PC-3 (cell line): ENCODE measurements at regions of chr20 and their contacts with region 1.

Region 1: GRCh38 chr20:51639206-51639832 is 96.8 kb upstream of the NFATC2 start:
- DNase-seq: peak; percentile 96
- ATAC-seq: peak; percentile 55
- H3K4me3 ChIP-seq: no peak overlapping the region
- H3K27ac ChIP-seq: peak overlapping the region; percentile 65
- H3K4me1 ChIP-seq: peaks cover 38% of the 10 kb centered on the region
- H3K27me3 ChIP-seq: no peaks in the 10 kb centered on the region
- CTCF ChIP-seq: peak; percentile 99

Region 2: GRCh38 chr20:51661609-51662178 is 22.4 kb after region 1 on chr20:
- CTCF ChIA-PET with region 1: interaction called, 4 read pairs
- POLR2A ChIA-PET with region 1: interaction called, 3 read pairs
- intact Hi-C with region 1: loop called (anchors 2 kb)
- DNase-seq: peak; percentile 99
- ATAC-seq: peak; percentile 60
- H3K4me3 ChIP-seq: no peak overlapping the region
- H3K27ac ChIP-seq: peak overlapping the region; percentile 88
- H3K4me1 ChIP-seq: peaks cover 55% of the 10 kb centered on the region
- H3K27me3 ChIP-seq: no peaks in the 10 kb centered on the region
- CTCF ChIP-seq: no peak

Region 3: DNA sequence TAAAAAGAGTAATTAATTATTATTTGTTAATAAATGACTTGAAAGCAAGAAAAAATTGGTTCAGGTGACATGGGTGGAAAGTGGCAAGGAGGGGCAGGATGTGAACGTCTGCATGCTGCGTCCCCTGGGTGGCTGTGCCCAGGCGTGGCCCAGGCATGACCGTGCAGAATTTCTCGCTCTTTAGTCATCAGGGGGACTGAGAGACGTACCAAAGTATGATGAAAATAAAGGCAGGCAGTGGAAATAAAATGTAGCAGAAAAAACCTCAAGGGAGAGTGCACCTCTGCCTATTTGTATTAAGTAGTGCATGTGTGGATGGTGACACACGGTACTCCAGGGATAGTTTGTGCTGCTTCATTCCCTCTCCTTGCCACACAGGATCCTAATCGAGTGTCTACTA is 47.7 kb after region 1 on chr20:
- CTCF ChIA-PET with region 1: no interaction called
- POLR2A ChIA-PET with region 1: no interaction called
- intact Hi-C with region 1: no loop called
- DNase-seq: peak; percentile 98
- ATAC-seq: peak; percentile 99
- H3K4me3 ChIP-seq: no peak overlapping the region
- H3K27ac ChIP-seq: peak overlapping the region; percentile 76
- H3K4me1 ChIP-seq: peaks cover 15% of the 10 kb centered on the region
- H3K27me3 ChIP-seq: no peaks in the 10 kb centered on the region
- CTCF ChIP-seq: no peak

Region 4: DNA sequence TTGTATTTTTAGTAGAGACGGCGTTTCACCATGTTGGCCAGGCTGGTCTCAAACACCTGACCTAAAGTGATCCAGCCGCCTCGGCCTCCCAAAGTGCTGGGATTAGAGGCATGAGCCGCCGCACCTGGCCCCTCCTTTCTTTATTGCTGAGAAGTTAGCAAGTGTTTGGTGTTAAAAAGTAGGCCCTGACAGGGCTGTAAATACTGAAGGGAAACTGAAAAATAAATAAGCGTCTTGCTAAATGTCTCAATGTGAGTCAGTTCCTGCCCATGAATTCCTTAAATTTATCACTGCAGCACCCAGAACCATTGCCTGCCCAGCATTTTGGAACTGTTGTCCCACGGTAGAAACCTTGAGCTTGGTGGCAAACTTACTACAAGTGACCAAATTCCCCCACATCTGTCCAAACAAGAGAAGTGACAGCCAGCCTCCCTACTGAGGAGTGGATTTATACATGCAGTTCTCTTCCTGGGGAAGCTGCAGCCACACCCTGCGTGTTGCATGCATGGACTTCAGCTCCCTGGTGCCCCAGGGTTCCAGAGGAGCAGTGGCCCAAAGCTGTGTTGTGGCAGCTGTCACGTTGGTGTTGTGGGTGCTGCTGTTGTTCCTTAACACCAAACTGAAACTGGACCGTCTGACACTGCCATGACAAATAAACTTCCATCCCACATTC is 103.5 kb after region 1 on chr20:
- CTCF ChIA-PET with region 1: interaction called, 5 read pairs
- POLR2A ChIA-PET with region 1: no interaction called
- intact Hi-C with region 1: loop called (anchors 2 kb)
- DNase-seq: peak; percentile 95
- ATAC-seq: peak; percentile 74
- H3K4me3 ChIP-seq: peak overlapping the region; percentile 2; the same call in 1 of the 2 replicates
- H3K27ac ChIP-seq: peak overlapping the region; percentile 92
- H3K4me1 ChIP-seq: peaks cover 57% of the 10 kb centered on the region
- H3K27me3 ChIP-seq: no peaks in the 10 kb centered on the region
- CTCF ChIP-seq: no peak

Region 5: DNA sequence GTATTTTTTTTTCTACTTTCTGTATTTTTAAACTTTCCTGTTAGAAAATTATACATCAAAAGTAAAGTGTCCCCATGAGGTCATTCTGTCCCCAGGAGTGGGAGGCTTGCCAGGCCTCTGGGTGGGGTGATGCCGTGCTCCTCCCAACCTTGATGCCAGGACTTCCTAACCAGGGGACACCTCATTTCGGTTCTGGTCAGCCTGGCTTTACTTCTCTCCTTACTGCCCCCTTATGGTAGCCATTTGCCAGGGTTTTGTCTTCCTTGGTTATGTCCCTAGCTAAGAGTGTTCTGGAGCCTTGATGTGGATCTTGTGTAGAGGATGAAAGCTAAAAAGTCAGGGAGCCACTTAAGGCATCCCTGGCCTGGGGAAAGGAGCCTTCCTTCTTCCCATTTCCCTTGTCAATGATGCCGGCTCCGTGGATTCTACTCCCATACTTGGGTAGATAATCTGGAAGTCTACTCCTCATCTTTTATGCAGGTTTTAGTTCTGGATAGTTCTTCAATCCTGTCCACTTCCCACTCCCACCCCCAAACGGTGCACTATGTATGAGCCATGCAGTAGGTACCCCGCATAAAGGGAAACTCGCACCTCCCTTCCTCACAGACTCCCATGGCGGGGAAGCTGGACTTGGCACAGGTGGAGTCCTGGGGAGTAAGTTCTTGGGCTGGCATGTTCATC is 327.1 kb after region 1 on chr20:
- CTCF ChIA-PET with region 1: interaction called, 7 read pairs
- POLR2A ChIA-PET with region 1: no interaction called
- intact Hi-C with region 1: loop called (anchors 1 kb)
- DNase-seq: peak; percentile 95
- ATAC-seq: peak; percentile 99
- H3K4me3 ChIP-seq: no peak overlapping the region
- H3K27ac ChIP-seq: no peak overlapping the region
- H3K4me1 ChIP-seq: no peaks in the 10 kb centered on the region
- H3K27me3 ChIP-seq: no peaks in the 10 kb centered on the region
- CTCF ChIP-seq: peak; percentile 97

Region 6: DNA sequence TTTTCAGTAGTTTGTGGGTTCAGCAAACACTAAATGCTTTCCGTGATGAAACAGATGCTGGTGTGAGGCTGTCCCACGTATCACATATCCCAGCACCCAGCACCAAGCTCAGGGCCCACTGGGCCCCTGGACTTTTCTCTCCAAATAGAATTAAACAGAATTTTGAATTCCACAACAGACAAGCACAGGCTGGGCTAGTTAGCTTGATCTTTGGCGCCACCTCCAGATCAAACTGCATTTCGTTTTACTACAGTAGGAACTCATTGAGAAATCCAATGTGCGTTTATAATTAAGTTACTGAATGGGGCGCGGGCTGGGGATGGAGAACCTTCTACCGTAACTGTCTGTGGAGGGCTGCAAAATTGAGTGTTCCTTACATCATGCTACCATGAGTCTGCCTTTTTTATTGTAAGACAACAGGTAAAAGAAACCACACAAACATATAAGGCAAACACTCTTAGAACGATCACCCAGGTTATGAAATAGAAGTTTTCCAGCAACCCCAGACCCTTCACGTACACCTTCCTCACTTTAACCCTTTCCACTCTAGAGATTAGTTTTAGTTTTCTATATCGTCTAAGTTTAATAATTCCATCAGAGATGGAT is 444.4 kb after region 1 on chr20:
- CTCF ChIA-PET with region 1: no interaction called
- POLR2A ChIA-PET with region 1: no interaction called
- intact Hi-C with region 1: loop called (anchors 1 kb)
- DNase-seq: peak; percentile 92
- ATAC-seq: peak; percentile 90
- H3K4me3 ChIP-seq: no peak overlapping the region
- H3K27ac ChIP-seq: no peak overlapping the region
- H3K4me1 ChIP-seq: peaks cover 16% of the 10 kb centered on the region
- H3K27me3 ChIP-seq: no peaks in the 10 kb centered on the region
- CTCF ChIP-seq: peak; percentile 99